Activated CD4-positive, alpha-beta memory T cell treated with anti-CD3 and anti-CD28 coated beads, Interleukin-2, amount 10 ng/mL, durations not matched to agents 7 days and 5 days (primary cell): ENCODE measurements at regions of chr1 and their contacts with region 1.

Region 1: DNA sequence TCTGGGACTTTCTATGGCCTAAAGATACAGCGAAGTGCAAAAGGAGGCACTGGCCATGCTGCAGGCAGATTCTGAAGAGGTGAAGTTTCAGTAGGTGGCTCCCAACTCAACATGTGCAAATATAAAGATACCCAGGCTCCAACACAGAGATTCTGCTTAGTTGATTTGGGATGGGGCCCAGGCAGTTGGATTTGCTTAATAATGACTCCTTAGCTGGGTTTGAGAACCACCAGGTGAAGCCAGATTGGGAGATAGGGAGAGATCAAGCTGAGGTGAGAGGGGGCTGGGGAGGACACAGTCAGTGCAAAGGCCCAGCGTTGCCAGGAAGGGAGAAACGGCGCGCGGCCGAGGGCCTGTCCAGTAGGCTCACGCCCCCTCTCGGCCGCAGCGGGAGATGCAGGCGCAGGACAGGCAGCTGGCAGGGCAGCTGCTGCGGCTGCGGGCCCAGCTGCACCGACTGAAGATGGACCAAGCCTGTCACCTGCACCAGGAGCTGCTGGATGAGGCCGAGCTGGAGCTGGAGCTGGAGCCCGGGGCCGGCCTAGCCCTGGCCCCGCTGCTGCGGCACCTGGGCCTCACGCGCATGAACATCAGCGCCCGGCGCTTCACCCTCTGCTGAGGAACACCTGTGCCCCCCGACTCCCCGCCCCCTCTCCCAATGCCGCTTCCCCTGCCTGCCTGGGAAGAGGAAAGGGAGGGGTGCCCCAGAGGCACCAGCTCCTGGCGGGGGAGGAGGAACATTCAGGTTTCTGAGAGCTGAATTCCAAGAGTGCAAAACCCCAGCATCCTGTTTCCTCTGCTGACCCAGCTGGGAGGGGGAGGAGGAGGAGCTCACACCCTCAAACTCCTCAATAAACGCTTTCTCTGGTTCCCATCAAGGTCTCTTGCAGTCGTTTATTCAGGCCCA is 1.2 kb downstream of the FAM167B start:
- DNase-seq: peak; percentile 83
- H3K4me3 Mint-ChIP-seq: peak overlapping the region; percentile 63
- H3K27ac Mint-ChIP-seq: peak overlapping the region; percentile 99
- H3K4me1 Mint-ChIP-seq: peaks cover 48% of the 10 kb centered on the region
- H3K27me3 Mint-ChIP-seq: no peaks in the 10 kb centered on the region

Region 2: GRCh38 chr1:32205401-32206370 is 42.5 kb before region 1 on chr1 and contains the start of gene IQCC:
- CTCF ChIA-PET with region 1: interaction called, 8 read pairs
- POLR2A ChIA-PET with region 1: interaction called, 10 read pairs
- DNase-seq: peak; percentile 87
- H3K4me3 Mint-ChIP-seq: peak within 1 kb of the TSS; percentile 81
- H3K27ac Mint-ChIP-seq: peak within 1 kb of the TSS; percentile 60
- H3K4me1 Mint-ChIP-seq: peaks cover 45% of the 10 kb centered on the region
- H3K27me3 Mint-ChIP-seq: no peaks in the 10 kb centered on the region
- total RNA-seq, gene IQCC: 3.7 to 3.8 TPM

Region 3: GRCh38 chr1:32228771-32229170 is 19.5 kb before region 1 on chr1:
- CTCF ChIA-PET with region 1: interaction called, 25 read pairs
- POLR2A ChIA-PET with region 1: interaction called, 14 read pairs
- DNase-seq: no peak
- H3K4me3 Mint-ChIP-seq: no peak overlapping the region
- H3K27ac Mint-ChIP-seq: no peak overlapping the region
- H3K4me1 Mint-ChIP-seq: peaks cover 21% of the 10 kb centered on the region
- H3K27me3 Mint-ChIP-seq: no peaks in the 10 kb centered on the region

Region 4: GRCh38 chr1:32273388-32274208 is 25.4 kb after region 1 on chr1:
- CTCF ChIA-PET with region 1: interaction called, 31 read pairs
- POLR2A ChIA-PET with region 1: interaction called, 156 read pairs
- DNase-seq: peak; percentile 81
- H3K4me3 Mint-ChIP-seq: peak overlapping the region; percentile 54
- H3K27ac Mint-ChIP-seq: peak overlapping the region; percentile 83
- H3K4me1 Mint-ChIP-seq: peaks cover 50% of the 10 kb centered on the region
- H3K27me3 Mint-ChIP-seq: no peaks in the 10 kb centered on the region

Region 5: DNA sequence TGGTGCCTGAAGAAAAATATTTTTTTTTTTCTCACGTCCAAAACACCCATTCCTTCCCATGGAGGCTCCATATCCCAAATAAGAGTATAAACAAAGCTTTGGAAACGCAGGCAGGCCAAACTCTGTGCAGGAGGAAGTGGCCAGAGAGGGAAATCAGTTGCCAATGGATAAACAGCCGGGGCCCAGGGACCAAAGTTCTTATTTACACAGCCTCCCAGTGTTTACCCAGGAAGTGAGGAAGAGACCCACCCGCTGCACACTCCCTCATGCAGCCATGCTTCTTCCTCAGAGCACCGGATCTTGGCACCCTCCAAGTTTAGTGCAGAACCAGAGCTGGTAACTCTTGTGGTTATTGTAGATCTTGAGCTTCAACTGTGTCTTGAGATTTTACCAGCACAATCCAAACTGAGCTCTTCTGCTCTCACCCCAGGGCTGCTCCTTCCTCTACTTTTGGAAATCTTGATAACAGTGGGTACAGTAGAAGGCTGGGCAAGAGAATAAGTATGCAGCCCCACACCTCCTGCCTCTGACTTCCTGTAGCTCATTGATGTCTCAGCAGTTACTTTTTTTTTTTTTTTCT is 73.6 kb after region 1 on chr1:
- CTCF ChIA-PET with region 1: interaction called, 14 read pairs
- POLR2A ChIA-PET with region 1: interaction called, 60 read pairs
- DNase-seq: peak; percentile 53
- H3K4me3 Mint-ChIP-seq: peak overlapping the region; percentile 57
- H3K27ac Mint-ChIP-seq: peak overlapping the region; percentile 91
- H3K4me1 Mint-ChIP-seq: peaks cover 58% of the 10 kb centered on the region
- H3K27me3 Mint-ChIP-seq: no peaks in the 10 kb centered on the region

Region 6: GRCh38 chr1:32650752-32651460 is 402.7 kb after region 1 on chr1 and contains the start of gene RBBP4:
- CTCF ChIA-PET with region 1: no interaction called
- POLR2A ChIA-PET with region 1: interaction called, 11 read pairs
- DNase-seq: peak; percentile 99
- H3K4me3 Mint-ChIP-seq: peak within 1 kb of the TSS; percentile 99
- H3K27ac Mint-ChIP-seq: peak within 1 kb of the TSS; percentile 100
- H3K4me1 Mint-ChIP-seq: peaks cover 59% of the 10 kb centered on the region
- H3K27me3 Mint-ChIP-seq: no peaks in the 10 kb centered on the region
- total RNA-seq, gene RBBP4: 271 to 277 TPM